Activated CD4-positive, alpha-beta T cell treated with anti-CD3 and anti-CD28 coated beads, Interleukin-2, amount 10 ng/mL, durations not matched to agents 24 days and 14 days (primary cell): ENCODE measurements at regions of chr6 and their contacts with region 1.

Region 1: GRCh38 chr6:160766989-160767660 is 65.1 kb downstream of the PLG start:
- DNase-seq: peak; percentile 82
- H3K4me3 Mint-ChIP-seq: peak overlapping the region; percentile 79
- H3K27ac Mint-ChIP-seq: no peak overlapping the region
- H3K4me1 Mint-ChIP-seq: peaks cover 2% of the 10 kb centered on the region
- H3K27me3 Mint-ChIP-seq: peaks cover 18% of the 10 kb centered on the region

Region 2: DNA sequence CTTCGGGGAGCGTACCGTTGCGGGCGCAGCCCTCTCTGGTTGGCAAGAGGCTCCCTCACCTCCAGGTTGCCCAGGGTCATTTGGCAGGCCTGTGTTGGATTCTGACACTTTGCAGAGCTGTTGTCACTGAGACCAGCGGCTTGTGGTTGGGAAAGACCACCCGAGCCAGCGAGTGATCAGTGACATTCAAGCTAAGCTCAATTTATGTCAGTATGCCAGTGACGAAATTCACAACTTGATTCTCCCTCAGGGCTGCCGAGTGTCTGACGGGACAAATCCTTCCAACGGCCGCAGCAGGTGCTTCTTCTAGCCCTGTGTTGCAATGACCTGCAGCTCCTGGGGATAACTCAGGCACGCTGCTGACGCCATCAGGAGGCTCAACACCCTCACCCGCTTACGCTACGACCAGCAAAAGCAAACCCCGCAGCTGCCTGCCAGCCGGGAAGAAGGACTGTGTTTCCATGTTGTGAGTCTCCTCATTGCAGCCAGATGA is 491.6 kb before region 1 on chr6:
- intact Hi-C with region 1: no loop called
- DNase-seq: no peak
- H3K4me3 Mint-ChIP-seq: no peak overlapping the region
- H3K27ac Mint-ChIP-seq: no peak overlapping the region
- H3K4me1 Mint-ChIP-seq: no peaks in the 10 kb centered on the region
- H3K27me3 Mint-ChIP-seq: no peaks in the 10 kb centered on the region

Region 3: DNA sequence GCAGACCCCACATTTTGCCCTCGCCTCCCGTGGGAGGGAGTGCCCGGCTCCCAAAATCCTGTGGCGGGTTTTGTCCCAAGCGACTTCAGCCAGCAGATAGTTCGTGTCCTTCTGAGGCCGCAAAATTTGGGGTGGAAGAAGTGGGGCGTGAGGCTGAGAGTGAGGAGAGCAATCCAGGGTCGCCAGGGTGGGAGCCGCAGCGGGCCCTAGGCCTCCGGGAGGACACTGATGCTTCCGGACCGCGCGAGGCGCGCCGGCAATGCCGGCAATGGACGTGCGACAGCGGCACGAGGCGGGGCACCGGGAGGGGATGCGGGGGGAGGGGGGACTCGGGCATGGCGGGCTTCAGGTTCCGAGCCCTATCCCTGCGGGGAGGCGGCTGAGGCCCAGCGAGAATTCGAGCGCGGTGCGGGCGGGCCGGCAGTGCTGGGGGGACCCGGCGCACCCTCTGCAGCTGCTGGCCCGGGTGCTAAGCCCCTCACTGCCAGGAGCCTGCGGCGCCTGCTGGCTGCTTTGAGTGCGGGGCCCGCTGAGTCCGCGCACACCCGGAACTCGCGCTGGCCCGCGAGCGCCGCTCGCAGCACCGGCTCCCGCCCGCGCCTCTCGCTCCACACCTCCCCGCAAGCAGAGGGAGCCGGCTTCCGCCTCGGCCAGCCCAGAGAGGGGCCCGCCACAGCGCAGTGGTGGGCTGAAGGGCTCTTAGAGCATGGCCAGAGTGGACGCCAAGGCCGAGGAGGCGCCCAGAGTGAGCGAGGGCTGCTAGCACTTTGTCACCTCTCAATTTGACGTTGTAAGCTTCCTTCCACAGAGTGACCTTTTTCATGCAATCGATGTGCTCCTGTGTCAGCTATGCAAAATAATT is 246.9 kb before region 1 on chr6:
- intact Hi-C with region 1: loop called (anchors 5 kb)
- DNase-seq: peak; percentile 93
- H3K4me3 Mint-ChIP-seq: peak overlapping the region; percentile 89
- H3K27ac Mint-ChIP-seq: peak overlapping the region; percentile 88
- H3K4me1 Mint-ChIP-seq: peaks cover 28% of the 10 kb centered on the region
- H3K27me3 Mint-ChIP-seq: peaks cover 51% of the 10 kb centered on the region

Region 4: GRCh38 chr6:160974304-160974771 is 207.2 kb after region 1 on chr6:
- intact Hi-C with region 1: no loop called
- DNase-seq: no peak
- H3K4me3 Mint-ChIP-seq: no peak overlapping the region
- H3K27ac Mint-ChIP-seq: no peak overlapping the region
- H3K4me1 Mint-ChIP-seq: no peaks in the 10 kb centered on the region
- H3K27me3 Mint-ChIP-seq: peaks cover 9% of the 10 kb centered on the region